ENCODE measurements at regions of chr9 and their contacts with region 1.

Region 1: GRCh38 chr9:95157481-95158151 is 159.9 kb downstream of the FANCC start:
- DNase-seq: no peak
- H3K4me3 Mint-ChIP-seq: no peak overlapping the region
- H3K27ac Mint-ChIP-seq: no peak overlapping the region
- H3K4me1 Mint-ChIP-seq: peaks cover 5% of the 10 kb centered on the region
- H3K27me3 Mint-ChIP-seq: no peaks in the 10 kb centered on the region

Region 2: GRCh38 chr9:94952565-94953373 is 204.8 kb before region 1 on chr9:
- CTCF ChIA-PET with region 1: no interaction called
- intact Hi-C with region 1: no loop called
- DNase-seq: peak; percentile 44
- H3K4me3 Mint-ChIP-seq: no peak overlapping the region
- H3K27ac Mint-ChIP-seq: no peak overlapping the region
- H3K4me1 Mint-ChIP-seq: peaks cover 39% of the 10 kb centered on the region
- H3K27me3 Mint-ChIP-seq: no peaks in the 10 kb centered on the region

Region 3: DNA sequence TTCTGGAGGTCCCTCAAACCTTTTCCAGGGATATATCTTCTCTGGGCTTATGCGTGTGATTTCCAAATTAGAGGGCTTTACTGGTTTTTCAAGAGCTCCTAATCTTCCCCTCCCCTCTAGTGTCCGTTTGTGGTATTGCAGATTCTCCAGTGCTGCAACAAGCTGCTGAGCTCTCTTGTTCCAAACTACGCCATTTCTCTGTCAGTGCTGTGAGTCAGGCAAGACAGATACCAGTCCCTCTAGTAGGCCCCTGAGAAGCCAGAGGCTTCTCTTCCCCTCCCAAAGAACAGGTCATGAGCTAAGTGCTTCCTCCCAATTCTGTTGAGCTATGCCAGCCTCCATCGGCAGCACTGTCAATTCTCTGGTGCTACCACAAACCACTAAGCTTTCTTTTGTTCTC is 10.4 kb after region 1 on chr9:
- CTCF ChIA-PET with region 1: interaction called, 10 read pairs
- intact Hi-C with region 1: no loop called
- DNase-seq: peak; percentile 69
- H3K4me3 Mint-ChIP-seq: no peak overlapping the region
- H3K27ac Mint-ChIP-seq: no peak overlapping the region
- H3K4me1 Mint-ChIP-seq: peaks cover 10% of the 10 kb centered on the region
- H3K27me3 Mint-ChIP-seq: no peaks in the 10 kb centered on the region